H1 (cell line): ENCODE measurements at regions of chr11 and their contacts with region 1.

Region 1: DNA sequence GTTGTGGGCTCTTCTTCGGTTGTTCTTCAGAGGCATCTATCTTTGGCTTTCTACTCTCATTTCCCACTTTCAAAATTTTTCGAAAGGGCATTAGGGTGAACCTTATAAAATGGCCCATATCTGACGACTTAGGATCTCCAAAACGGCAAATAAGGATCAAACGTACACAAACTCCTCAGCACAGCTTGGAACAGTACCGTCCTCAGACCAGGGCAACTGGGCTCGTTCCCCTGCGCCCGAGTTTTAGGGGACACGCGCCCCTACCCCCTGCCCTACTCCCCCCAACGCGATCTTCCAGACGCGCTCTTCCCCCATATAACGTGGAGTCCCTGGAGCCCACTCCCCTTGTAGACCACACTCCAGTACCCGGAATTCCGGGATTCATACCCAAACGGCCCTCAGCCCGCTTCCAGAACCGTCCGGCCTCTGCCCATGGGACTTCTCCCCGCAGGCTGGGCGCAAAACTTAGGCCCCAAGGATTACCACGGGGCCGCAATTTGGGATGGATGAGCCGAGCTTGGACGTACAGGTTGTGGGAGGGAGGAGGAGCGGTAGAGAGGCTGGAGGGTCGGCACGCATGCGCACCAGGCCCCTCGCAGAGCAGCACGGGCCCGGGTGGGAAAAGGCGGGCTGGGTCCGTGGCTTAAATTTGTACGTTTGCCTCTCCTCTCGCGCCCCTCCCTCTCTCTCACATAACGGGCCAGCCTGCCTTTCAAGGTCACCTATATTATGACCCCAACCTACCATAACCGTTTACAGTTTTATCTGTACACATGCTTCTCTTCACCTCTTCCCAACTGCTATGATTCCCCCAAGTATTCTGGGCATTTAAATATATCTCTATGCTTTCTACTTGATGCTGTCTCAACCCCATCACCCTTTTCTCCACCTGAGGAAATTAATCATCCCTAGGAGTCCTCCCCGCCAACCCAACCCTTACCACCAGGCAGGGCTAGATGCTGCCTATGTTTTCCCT is 3.4 kb downstream of the CCDC89 start:
- DNase-seq: no peak
- H3K4me3 ChIP-seq: no peak overlapping the region
- H3K27ac ChIP-seq: no peak overlapping the region
- H3K4me1 ChIP-seq: peaks cover 0 to 3% (median 1%) of the 10 kb centered on the region in 4 experiments; a peak in 3 of 7 replicates
- H3K27me3 ChIP-seq: no peaks in the 10 kb centered on the region; a peak in 1 of 7 replicates
- CTCF ChIP-seq: no peak
- EP300 ChIP-seq: no peak
- POLR2A ChIP-seq: no peak
- RAD21 ChIP-seq: no peak

Region 2: GRCh38 chr11:85656777-85657176 is 25.8 kb before region 1 on chr11:
- CTCF ChIA-PET with region 1: no interaction called
- POLR2A ChIA-PET with region 1: no interaction called
- DNase-seq: no peak
- H3K4me3 ChIP-seq: no peak overlapping the region
- H3K27ac ChIP-seq: no peak overlapping the region
- H3K4me1 ChIP-seq: peaks cover 0 to under 1% (median 0%) of the 10 kb centered on the region in 4 experiments; a peak in 1 of 7 replicates
- H3K27me3 ChIP-seq: peaks cover 0 to 1% (median 0%) of the 10 kb centered on the region in 4 experiments; a peak in 1 of 7 replicates
- CTCF ChIP-seq: no peak
- EP300 ChIP-seq: no peak
- POLR2A ChIP-seq: no peak
- RAD21 ChIP-seq: no peak

Region 3: GRCh38 chr11:85694386-85694980 is 11.9 kb after region 1 on chr11:
- CTCF ChIA-PET with region 1: interaction called, 33 read pairs
- POLR2A ChIA-PET with region 1: no interaction called
- DNase-seq: no peak
- H3K4me3 ChIP-seq: no peak overlapping the region
- H3K27ac ChIP-seq: no peak overlapping the region
- H3K4me1 ChIP-seq: no peaks in the 10 kb centered on the region
- H3K27me3 ChIP-seq: no peaks in the 10 kb centered on the region
- CTCF ChIP-seq: peak in 1 of 3 experiments; percentile 48; a peak in 2 of 4 replicates
- EP300 ChIP-seq: no peak
- POLR2A ChIP-seq: no peak
- RAD21 ChIP-seq: peak; percentile 61 to 63